ENCODE measurements at regions of chr3 and their contacts with region 1.

Region 1: DNA sequence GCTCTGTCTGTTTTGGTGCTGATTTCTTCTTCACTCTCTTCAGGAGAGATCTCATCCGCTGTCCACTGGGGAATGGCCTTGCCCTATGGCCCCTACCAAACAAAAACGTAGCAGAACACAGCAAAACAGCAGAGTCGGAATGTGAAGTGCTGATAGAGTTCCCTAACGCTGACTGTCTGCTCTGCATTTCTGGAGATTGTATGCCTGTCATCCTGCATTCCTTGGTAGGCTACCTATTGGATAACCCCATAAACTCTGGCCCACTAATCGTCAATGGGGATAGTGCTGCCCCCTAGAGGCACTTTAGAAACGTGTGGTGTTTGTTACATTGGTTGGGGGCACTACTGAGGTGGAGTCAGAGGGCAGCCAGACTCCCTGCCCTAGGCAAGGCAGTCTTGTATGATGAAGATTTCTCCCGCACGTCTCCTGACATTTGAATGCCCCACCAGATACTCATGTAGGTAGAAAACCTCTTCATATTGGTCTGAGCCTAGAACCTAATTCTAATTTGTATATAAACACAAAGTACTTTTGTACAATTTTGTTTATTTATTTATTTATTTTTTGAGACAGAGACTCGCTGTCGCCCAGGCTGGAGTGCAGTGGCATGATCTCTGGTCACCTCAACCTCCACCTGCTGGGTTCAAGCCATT is 15.6 kb upstream of the MAGEF1 start:
- H3K4me3 ChIP-seq: no peak overlapping the region
- H3K27ac ChIP-seq: no peak overlapping the region
- H3K4me1 ChIP-seq: no peaks in the 10 kb centered on the region
- CTCF ChIP-seq: 0 out of 2 replicates have a peak, but pooled peaks have one; percentile 29

Region 2: GRCh38 chr3:184716622-184717398 is 10.7 kb before region 1 on chr3:
- CTCF ChIA-PET with region 1: interaction called, 10 read pairs
- POLR2A ChIA-PET with region 1: interaction called, 3 read pairs
- H3K4me3 ChIP-seq: no peak overlapping the region
- H3K27ac ChIP-seq: peak overlapping the region; percentile 62; the same call in 1 of the 2 replicates
- H3K4me1 ChIP-seq: peaks cover 9% of the 10 kb centered on the region
- CTCF ChIP-seq: no peak

Region 3: DNA sequence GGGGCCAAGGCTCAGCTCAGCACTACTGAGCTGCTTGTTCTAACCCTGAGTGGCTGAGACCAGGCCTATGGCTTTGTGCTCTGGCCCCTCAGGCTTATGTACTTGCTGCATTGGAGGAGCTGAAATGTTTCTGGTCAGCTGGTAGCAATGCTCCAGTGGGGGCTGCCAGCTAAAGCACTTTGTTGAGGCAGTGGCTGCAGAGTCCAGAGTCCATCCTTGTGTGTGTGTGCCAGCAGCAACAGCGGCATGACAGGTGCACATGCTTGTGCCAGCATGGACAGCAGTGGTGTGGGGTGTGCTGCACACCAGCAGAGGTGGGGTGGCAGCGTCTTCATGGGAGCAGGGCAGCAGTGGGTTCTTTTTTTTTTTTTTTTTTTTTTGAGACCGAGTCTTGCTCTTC is 253.6 kb after region 1 on chr3:
- CTCF ChIA-PET with region 1: no interaction called
- POLR2A ChIA-PET with region 1: no interaction called
- H3K4me3 ChIP-seq: no peak overlapping the region
- H3K27ac ChIP-seq: no peak overlapping the region
- H3K4me1 ChIP-seq: no peaks in the 10 kb centered on the region
- CTCF ChIP-seq: no peak